ENCODE measurements at regions of chr15 and their contacts with region 1.

Region 1: DNA sequence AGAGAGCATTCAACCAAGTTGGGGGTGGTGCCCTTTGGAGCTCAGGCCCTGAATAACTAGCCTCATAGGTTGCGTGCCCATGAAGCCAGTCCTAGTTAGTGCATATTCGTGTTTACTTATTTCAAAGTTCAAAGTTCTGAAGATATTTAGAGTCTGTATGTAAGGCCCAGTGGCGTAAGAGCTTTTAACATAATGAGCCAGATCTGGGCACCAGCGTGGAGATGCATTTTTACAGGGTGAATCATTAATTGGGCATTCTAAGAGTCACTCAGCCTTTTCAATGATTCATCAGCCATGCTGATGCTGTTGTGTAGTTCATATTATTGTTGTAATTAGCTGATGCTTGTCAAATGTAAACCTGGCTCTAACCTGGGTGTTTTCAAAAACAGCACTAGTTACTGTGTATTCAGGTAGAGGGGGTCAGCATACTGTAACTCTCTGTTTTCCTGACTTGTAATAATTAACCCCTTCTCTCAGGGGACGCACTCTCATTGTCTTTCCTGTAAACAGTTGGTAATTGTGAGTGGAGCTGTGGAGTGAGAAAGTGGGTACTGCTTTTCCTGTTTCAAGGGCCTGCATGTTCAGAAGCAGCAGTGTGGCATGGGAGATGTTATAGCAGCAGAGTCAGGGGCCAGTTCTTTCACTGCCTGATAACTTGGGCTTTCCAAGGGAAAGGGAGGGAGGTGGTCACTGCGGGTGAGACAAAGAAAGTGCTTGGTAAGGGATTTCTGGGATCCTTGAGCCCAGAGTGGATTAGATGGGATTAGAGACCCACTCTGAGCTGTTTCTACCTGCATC is 104.9 kb downstream of the RPLP1 start:
- DNase-seq: peak; percentile 91 to 96
- ATAC-seq: peak; percentile 75 to 85
- H3K4me3 ChIP-seq: no peak overlapping the region; the same call in 2 of the 3 replicates
- H3K27ac ChIP-seq: peak overlapping the region; percentile 82 to 87
- H3K4me1 ChIP-seq: peaks cover 83% of the 10 kb centered on the region
- CTCF ChIP-seq: no peak
- EP300 ChIP-seq: peak; percentile 87 to 96; a peak in 4 of 5 replicates
- POLR2A ChIP-seq: no peak
- RAD21 ChIP-seq: peak; percentile 5 to 57; a peak in 3 of 5 replicates

Region 2: GRCh38 chr15:69540622-69541021 is 16.9 kb before region 1 on chr15:
- CTCF ChIA-PET with region 1: interaction called, 17 read pairs
- POLR2A ChIA-PET with region 1: no interaction called
- DNase-seq: no peak
- ATAC-seq: no peak
- H3K4me3 ChIP-seq: no peak overlapping the region
- H3K27ac ChIP-seq: no peak overlapping the region
- H3K4me1 ChIP-seq: no peaks in the 10 kb centered on the region
- CTCF ChIP-seq: no peak
- EP300 ChIP-seq: no peak
- POLR2A ChIP-seq: no peak
- RAD21 ChIP-seq: no peak

Region 3: DNA sequence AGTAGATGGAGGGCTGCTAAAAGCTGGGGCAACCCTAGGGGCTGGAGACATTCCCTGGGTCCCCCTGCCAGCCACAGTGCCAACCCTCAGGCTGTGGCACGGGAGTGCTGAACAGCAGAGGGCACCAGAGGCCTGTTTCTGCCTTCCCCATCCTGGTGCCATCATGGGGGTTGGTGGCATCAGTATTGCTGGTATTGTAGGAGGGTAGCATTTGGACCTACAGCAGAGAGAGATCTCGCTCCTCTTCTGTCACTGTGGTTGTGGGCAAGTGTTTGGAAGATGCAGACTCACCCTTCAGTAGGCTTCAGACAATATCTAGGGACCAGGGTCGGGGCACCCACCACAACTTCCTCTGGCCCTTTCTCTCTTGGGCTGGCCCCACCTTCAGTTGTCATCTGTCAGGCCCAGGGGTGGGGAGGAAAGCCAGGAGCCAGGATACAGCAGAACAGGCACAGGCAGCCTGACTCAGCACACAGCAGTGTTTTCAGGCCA is 18.5 kb after region 1 on chr15:
- CTCF ChIA-PET with region 1: interaction called, 12 read pairs
- POLR2A ChIA-PET with region 1: no interaction called
- DNase-seq: peak; percentile 68 to 87
- ATAC-seq: peak; percentile 79 to 92
- H3K4me3 ChIP-seq: no peak overlapping the region
- H3K27ac ChIP-seq: peak overlapping the region; percentile 28 to 50; a peak in 4 of 6 replicates
- H3K4me1 ChIP-seq: peaks cover 37% of the 10 kb centered on the region; the same call in 2 of the 3 replicates
- CTCF ChIP-seq: peak; percentile 94
- EP300 ChIP-seq: no peak
- POLR2A ChIP-seq: no peak
- RAD21 ChIP-seq: peak; percentile 98

Region 4: DNA sequence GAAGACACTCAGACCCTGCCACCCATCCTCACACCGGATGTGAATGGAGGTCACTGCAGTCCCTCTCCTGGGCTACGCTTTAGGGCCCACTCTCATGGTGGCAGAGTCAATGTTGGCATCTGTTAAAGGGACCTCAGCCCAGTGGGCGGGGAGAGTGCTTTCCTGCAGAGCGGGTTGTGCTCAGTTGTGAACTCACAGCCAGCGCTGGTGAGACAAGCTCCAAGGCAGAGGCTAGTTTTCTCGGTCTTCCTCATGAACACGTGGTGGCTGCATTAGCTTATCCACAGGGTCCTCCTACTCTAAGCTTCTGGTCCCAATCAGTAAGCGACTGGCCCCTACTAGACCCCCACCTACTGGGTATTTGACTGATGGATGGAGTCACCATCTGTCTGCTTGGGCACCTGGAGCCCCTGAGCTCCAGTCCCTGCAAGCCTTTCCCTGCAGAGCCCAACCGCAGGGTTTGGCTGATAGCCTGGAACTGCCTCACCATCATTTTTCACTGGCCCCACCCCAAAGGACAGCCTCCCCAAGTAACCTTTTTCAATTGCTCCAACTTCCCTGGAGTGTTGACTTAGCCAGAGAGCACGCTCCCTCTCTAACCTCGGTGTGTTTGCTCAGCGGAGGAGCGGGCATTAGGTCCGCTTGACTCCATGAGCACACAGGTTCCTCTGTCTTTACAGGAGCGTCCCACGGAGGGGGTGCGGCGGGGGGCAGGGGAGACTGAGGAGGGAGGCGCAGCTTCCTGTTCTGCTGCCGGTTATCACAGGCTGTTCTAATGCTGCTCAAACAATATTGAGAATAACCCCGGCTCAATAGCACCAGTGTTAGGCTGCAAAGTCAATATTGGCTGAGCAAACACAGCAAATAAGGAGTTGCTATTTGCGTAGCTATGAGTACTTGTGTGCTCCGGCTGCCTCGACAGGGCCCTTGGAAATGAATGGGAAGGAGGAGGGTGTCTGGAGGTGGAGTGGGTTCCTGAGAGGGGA is 36.7 kb after region 1 on chr15:
- CTCF ChIA-PET with region 1: interaction called, 3 read pairs
- POLR2A ChIA-PET with region 1: interaction called, 18 read pairs
- DNase-seq: peak; percentile 89 to 98
- ATAC-seq: peak; percentile 86 to 90
- H3K4me3 ChIP-seq: peak overlapping the region; percentile 17; the same call in 1 of the 3 replicates
- H3K27ac ChIP-seq: peak overlapping the region; percentile 63 to 73
- H3K4me1 ChIP-seq: peaks cover 50% of the 10 kb centered on the region
- CTCF ChIP-seq: no peak
- EP300 ChIP-seq: peak; percentile 53 to 69; a peak in 2 of 5 replicates
- POLR2A ChIP-seq: no peak
- RAD21 ChIP-seq: peak in 1 of 2 experiments; percentile 49; a peak in 3 of 5 replicates